ENCODE measurements at regions of chr5 and their contacts with region 1.

Region 1: GRCh38 chr5:173887610-173888472 is at the start of gene CPEB4:
- DNase-seq: peak; percentile 98 to 100 (median 98)
- ATAC-seq: peak; percentile 83
- H3K4me3 ChIP-seq: peak within 1 kb of the TSS; percentile 72
- H3K27ac ChIP-seq: peak within 1 kb of the TSS; percentile 100
- H3K4me1 ChIP-seq: peaks cover 28 to 47% of the 10 kb centered on the region in 2 experiments
- H3K27me3 ChIP-seq: no peaks in the 10 kb centered on the region
- CTCF ChIP-seq: no peak
- EP300 ChIP-seq: no peak
- POLR2A ChIP-seq: peak; percentile 92
- RAD21 ChIP-seq: peak in 1 of 2 experiments; percentile 27; a peak in 1 of 4 replicates
- polyA plus RNA-seq, gene CPEB4: 7.4 to 10.2 TPM

Region 2: GRCh38 chr5:173615884-173616576 is 271.8 kb before region 1 on chr5:
- CTCF ChIA-PET with region 1: interaction called, 3 read pairs
- POLR2A ChIA-PET with region 1: interaction called, 5 read pairs
- in situ Hi-C with region 1: no loop called
- intact Hi-C with region 1: loop called (anchors 1 kb)
- DNase-seq: peak; percentile 61 to 78 (median 66)
- ATAC-seq: peak; percentile 86
- H3K4me3 ChIP-seq: peak overlapping the region; percentile 95
- H3K27ac ChIP-seq: peak overlapping the region; percentile 46
- H3K4me1 ChIP-seq: peaks cover 4 to 9% of the 10 kb centered on the region in 2 experiments; a peak in 3 of 5 replicates
- H3K27me3 ChIP-seq: no peaks in the 10 kb centered on the region
- CTCF ChIP-seq: peak; percentile 74 to 75 (median 75)
- EP300 ChIP-seq: no peak
- POLR2A ChIP-seq: no peak
- RAD21 ChIP-seq: peak; percentile 10 to 29; a peak in 2 of 4 replicates

Region 3: DNA sequence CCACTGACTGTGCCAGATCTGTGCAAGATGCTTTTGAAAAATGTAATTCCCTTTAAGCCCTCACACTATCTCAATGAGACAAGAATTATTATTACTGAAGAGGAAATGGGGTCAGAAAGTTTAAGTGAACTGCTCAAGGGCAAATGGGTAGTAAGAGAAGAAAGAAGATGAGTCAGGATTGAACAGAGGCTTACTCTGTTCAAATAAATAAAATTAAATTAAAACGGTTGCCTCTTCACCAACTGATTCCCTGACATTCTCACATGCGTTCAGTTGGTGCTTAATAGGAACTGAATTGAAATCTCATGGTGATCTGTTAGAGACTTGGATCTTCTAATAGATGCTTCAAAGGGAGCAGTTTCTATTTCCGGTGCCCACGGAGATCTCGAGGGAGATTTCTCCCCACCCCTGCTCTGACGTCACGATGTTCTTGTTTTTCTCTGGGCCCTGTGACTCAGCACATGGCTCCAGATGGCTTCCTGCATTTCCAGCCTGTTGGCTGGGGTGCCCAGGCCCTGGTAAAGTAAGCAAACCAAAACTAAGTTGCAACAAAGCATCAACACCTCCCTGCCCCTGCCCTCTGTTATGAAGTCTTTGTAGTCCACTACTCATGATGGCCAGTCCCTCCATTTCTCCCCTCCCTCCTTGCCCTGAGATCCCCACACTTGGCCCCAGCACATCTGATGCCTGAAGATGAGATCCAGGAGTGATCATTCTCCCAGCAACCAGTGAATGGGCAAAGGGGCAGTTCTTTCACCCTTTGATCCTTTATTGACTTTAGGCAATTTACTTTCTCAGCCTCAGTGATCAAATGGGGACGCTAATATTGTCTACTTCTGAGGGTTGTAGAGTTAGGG is 105.8 kb before region 1 on chr5:
- CTCF ChIA-PET with region 1: no interaction called
- POLR2A ChIA-PET with region 1: interaction called, 3 read pairs
- in situ Hi-C with region 1: loop called (anchors 10 kb)
- intact Hi-C with region 1: loop called (anchors 2 kb)
- DNase-seq: peak; percentile 72 to 86 (median 76)
- ATAC-seq: peak; percentile 52
- H3K4me3 ChIP-seq: no peak overlapping the region
- H3K27ac ChIP-seq: peak overlapping the region; percentile 92
- H3K4me1 ChIP-seq: peaks cover 25 to 61% of the 10 kb centered on the region in 2 experiments
- H3K27me3 ChIP-seq: no peaks in the 10 kb centered on the region
- CTCF ChIP-seq: no peak
- EP300 ChIP-seq: peak; percentile 69; the same call in 1 of the 2 replicates
- POLR2A ChIP-seq: no peak
- RAD21 ChIP-seq: no peak

Region 4: DNA sequence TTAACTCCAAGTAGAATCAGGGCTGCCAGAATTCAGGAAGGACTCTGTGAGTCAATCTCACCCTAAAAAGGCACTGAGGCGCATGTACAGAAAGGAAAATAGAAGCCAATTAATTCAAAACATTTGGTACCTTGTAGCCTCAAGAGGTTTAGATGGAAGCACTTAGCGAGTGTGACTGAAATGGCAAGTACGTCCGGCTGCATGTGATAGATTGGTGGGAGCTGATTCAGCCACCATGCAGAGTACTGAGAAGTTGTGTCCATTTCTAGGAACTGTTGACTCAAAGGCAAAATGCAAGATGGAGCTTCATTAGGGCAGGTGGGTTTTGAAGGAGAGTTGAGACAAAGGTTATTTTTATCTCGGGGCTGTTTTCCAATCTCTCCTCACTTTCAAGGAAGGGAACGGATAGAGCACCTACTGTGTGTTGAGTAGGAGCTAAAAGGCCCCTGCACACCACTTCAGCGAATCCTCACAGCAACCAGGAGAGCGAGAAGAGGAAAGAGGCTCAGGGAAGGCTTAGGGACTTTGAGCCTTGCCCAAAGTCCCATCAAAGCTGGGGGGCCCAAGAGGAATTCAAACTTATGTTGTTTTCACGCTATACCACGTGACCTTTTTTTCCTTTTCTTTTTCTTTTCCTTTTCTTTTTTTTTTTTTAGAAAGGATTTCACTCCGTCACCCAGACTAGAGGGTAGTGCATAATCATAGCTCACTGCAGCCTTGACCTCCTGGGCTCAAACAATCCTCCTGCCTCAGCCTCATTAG is 34.3 kb before region 1 on chr5:
- CTCF ChIA-PET with region 1: no interaction called
- POLR2A ChIA-PET with region 1: interaction called, 9 read pairs
- in situ Hi-C with region 1: no loop called
- intact Hi-C with region 1: loop called (anchors 2 kb)
- DNase-seq: peak; percentile 53 to 97 (median 68)
- ATAC-seq: peak; percentile 68
- H3K4me3 ChIP-seq: no peak overlapping the region
- H3K27ac ChIP-seq: peak overlapping the region; percentile 91
- H3K4me1 ChIP-seq: peaks cover 62 to 86% of the 10 kb centered on the region in 2 experiments
- H3K27me3 ChIP-seq: no peaks in the 10 kb centered on the region; a peak in 1 of 5 replicates
- CTCF ChIP-seq: 0 out of 6 replicates have a peak, but pooled peaks of 1 of the 3 experiments have one; percentile 1
- EP300 ChIP-seq: peak; percentile 98
- POLR2A ChIP-seq: peak; percentile 48; the same call in 1 of the 2 replicates
- RAD21 ChIP-seq: peak in 1 of 2 experiments; percentile 30; a peak in 2 of 4 replicates

Region 5: DNA sequence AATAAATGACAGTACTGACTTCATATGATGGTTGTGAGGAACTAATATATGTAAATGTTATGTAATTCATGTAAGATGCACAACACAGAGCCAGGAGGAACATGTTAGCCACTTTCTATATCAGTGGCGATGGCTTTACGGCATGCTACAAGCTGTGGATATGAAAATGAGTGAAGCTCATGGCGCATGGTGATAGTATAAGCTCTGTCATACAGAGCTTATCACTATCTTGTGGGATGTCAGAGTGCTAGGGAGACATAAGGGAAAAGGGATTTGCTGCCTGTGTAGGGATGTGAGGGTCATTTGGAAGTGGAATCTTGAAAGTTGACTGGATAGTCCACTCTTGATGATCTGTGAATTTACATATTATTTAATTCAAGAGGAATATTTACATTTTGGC is 13.9 kb after region 1 on chr5:
- CTCF ChIA-PET with region 1: no interaction called
- POLR2A ChIA-PET with region 1: interaction called, 30 read pairs
- in situ Hi-C with region 1: no loop called
- intact Hi-C with region 1: no loop called
- DNase-seq: peak in 1 of 4 experiments; percentile 58
- ATAC-seq: peak; percentile 82
- H3K4me3 ChIP-seq: no peak overlapping the region
- H3K27ac ChIP-seq: peak overlapping the region; percentile 33; the same call in 2 of the 3 replicates
- H3K4me1 ChIP-seq: peaks cover 4 to 30% of the 10 kb centered on the region in 2 experiments; a peak in 4 of 5 replicates
- H3K27me3 ChIP-seq: no peaks in the 10 kb centered on the region
- CTCF ChIP-seq: no peak
- EP300 ChIP-seq: peak; percentile 13; the same call in 1 of the 2 replicates
- POLR2A ChIP-seq: peak; percentile 50
- RAD21 ChIP-seq: no peak

Region 6: DNA sequence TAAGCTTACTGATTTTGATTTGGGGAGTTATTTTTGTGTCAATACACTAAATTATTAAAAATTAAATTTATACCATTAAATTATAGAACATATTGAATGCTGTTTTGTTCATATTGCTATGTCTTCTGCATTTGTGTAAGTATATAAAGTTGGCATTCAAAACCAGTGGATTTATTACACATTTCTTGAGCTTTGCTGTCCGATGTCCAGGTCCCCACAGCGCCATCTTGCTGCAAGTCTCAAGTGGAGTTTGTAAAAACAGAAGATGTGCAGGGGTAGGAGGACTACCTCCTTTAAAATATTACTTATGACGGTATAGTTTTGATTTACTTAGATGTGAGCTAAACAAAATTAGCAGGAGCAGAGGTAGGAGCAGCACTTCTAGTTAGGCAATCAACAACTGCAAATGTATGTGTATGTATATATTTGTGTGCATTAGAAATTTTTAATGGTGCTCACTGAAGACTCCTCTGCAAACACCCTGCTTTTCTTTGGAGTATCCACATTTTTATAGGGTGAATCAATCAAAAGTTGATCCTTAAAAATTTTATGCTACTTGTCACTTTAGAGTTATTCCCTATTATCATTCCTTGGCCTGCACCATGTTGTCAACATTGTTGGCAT is 37.7 kb after region 1 on chr5:
- CTCF ChIA-PET with region 1: no interaction called
- POLR2A ChIA-PET with region 1: interaction called, 6 read pairs
- in situ Hi-C with region 1: no loop called
- intact Hi-C with region 1: loop called (anchors 2 kb)
- DNase-seq: peak; percentile 33 to 69 (median 43)
- ATAC-seq: peak; percentile 76
- H3K4me3 ChIP-seq: no peak overlapping the region
- H3K27ac ChIP-seq: peak overlapping the region; percentile 17; the same call in 1 of the 3 replicates
- H3K4me1 ChIP-seq: peaks cover 5 to 24% of the 10 kb centered on the region in 2 experiments; a peak in 4 of 5 replicates
- H3K27me3 ChIP-seq: no peaks in the 10 kb centered on the region
- CTCF ChIP-seq: peak; percentile 66 to 71 (median 70)
- EP300 ChIP-seq: no peak
- POLR2A ChIP-seq: no peak
- RAD21 ChIP-seq: peak; percentile 51 to 69